ENCODE measurements at regions of chr1 and their contacts with region 1.

Region 1: GRCh38 chr1:109643385-109644230 is 12.3 kb upstream of the GSTM4 start:
- DNase-seq: peak; percentile 96
- H3K4me3 ChIP-seq: peak overlapping the region in 1 of 8 donors; percentile 19
- H3K27ac ChIP-seq: peak overlapping the region in 2 of 8 donors; percentile 28 to 36
- H3K4me1 ChIP-seq: peaks cover 6 to 22% (median 16%) of the 10 kb centered on the region in 6 donors
- H3K27me3 ChIP-seq: no peaks in the 10 kb centered on the region
- CTCF ChIP-seq: peak; percentile 73 to 96 (median 92)
- POLR2A ChIP-seq: no peak

Region 2: GRCh38 chr1:109773146-109773899 is 129.7 kb after region 1 on chr1:
- intact Hi-C with region 1: loop called (anchors 5 kb)
- DNase-seq: peak; percentile 90
- H3K4me3 ChIP-seq: no peak overlapping the region
- H3K27ac ChIP-seq: no peak overlapping the region
- H3K4me1 ChIP-seq: peaks cover 0 to 27% (median 12%) of the 10 kb centered on the region in 6 donors
- H3K27me3 ChIP-seq: peaks cover 0 to 6% (median 0%) of the 10 kb centered on the region in 7 donors
- CTCF ChIP-seq: peak; percentile 76 to 92 (median 86)
- POLR2A ChIP-seq: no peak

Region 3: DNA sequence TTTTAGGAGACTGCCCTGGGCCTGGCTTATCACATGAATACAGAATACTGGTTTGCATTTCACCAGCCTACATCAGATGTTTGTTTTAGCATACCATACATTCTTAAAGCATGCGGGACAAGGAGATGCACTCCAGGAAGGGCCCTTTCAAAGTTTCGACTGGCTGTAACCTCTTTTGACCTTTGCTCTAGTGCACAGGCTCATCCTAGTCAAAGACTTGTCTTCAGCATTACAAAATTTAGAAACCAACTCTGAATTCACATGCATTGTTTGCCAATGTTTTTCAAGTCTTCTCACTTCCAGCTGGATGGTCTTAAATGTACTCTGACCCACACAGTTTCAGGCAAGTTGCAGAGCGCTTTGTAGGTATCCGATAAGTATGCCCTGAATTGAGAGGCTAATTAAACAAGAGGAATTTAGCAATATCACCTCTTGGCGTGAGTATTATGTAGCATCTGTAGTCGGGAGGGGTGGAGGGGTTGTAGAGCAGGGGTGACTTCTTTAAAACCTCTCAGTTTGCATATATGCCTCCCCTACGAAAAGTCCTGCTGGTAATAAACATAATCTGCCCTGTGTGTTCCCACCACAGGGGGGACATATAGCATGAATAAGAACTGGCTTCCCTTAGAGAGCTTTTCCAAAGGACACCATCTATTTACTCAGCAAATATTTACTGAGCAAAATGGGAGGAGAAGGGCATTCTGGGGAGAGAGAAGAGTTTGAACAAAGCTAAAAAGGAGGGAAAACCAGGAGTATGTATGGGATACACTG is 316.6 kb after region 1 on chr1:
- intact Hi-C with region 1: no loop called
- DNase-seq: no peak
- H3K4me3 ChIP-seq: no peak overlapping the region
- H3K27ac ChIP-seq: no peak overlapping the region
- H3K4me1 ChIP-seq: peaks cover 0 to 5% (median 0%) of the 10 kb centered on the region in 6 donors
- H3K27me3 ChIP-seq: no peaks in the 10 kb centered on the region
- CTCF ChIP-seq: no peak
- POLR2A ChIP-seq: no peak

Region 4: DNA sequence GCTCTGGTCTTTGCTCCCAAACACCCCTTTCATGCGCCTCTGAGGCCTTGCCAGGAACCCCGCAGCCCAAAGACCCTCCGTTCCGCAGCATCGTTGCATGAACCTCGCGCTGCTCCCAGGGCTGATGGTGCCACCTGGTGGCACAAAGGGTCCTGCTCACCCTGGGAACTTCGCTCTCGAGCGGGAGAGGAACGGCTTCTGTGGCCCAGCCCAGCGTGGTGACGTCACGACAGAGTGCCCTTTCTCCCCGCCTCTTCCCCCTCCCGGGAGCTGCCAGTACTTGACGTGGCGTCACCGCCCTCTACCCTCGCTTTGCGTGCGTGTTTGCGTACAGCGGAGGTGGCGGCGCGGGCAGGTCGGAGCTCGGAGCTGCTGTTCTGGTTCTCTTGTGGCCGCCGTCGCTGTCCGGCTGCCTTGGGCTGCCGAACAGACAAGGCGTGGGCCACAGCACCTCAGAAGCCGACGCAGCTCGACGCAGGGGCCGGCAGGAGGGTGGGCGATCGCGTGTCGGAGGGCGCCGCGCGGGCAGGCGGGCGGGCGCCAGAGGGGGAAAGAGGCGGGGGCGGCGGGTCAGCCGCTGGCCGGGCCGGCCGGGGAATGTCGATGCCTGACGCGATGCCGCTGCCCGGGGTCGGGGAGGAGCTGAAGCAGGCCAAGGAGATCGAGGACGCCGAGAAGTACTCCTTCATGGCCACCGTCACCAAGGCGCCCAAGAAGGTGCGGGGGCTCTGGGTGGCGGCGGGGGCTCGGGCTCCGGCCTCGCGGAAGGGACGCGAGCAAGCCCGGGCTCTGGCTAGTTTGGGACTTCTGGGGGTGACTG is 341.1 kb after region 1 on chr1 and contains the start of gene AHCYL1:
- intact Hi-C with region 1: loop called (anchors 10 kb)
- DNase-seq: peak; percentile 100
- H3K4me3 ChIP-seq: peak within 1 kb of the TSS; percentile 61 to 78 (median 68)
- H3K27ac ChIP-seq: peak within 1 kb of the TSS; percentile 91 to 96 (median 95)
- H3K4me1 ChIP-seq: peaks cover 19 to 71% (median 52%) of the 10 kb centered on the region in 6 donors
- H3K27me3 ChIP-seq: no peaks in the 10 kb centered on the region
- CTCF ChIP-seq: peak; percentile 98 to 100 (median 100)
- POLR2A ChIP-seq: peak; percentile 48 to 94 (median 87)
- total RNA-seq, gene AHCYL1: 47.1 to 65.3 (median 52.7) TPM